ENCODE measurements at regions of chr1 and their contacts with region 1.

Region 1: DNA sequence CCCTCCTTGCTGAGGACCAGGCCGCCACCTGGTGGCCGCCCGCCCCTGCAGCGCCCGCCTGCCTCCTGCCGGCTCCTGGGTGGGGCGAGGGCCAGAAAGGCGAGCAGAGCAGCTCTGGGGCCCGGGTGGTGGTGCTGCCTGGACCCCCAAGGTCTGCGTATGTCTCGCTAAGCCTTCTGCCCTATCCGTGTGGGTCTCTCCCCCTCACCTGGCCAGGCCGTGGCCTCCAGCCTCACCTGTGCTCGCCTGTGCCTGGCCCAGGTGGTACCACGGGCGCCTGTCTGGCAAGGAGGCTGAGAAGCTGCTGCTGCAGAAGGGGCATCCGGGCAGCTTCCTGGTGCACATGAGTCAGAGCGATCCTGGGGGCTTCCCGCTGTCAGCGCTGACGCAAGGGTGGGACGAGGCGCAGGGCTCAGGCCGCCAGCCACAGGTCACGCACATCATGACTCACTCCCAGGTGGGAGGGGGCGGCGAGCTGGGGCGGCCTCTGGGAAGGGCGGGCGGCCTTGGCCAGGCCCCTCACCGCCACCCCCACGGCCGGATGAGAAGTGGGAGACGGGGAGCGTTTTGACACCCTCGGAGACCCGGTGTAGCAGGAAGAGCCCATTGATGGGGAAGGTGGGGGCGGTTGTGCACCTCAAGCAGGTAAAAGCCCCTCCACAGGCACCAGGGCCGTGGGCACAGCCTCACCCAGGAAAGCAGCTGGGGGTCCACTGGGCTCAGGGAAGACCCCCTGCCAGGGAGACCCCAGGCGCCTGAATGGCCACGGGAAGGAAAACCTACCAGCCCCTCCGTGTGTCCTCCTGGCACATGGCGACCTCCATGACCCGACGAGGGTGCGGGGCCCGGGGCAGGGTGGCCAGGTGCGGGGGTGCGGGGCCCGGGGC is 9.9 kb downstream of the RNF223 start:
- DNase-seq: peak; percentile 75
- ATAC-seq: peak; percentile 70

Region 2: GRCh38 chr1:983799-984473 is 80.3 kb before region 1 on chr1:
- intact Hi-C with region 1: loop called (anchors 2 kb)
- DNase-seq: peak; percentile 65
- ATAC-seq: no peak

Region 3: GRCh38 chr1:997993-998744 is 66.0 kb before region 1 on chr1:
- intact Hi-C with region 1: no loop called
- DNase-seq: no peak
- ATAC-seq: no peak